AG04449 (cell line): ENCODE measurements at regions of chr20 and their contacts with region 1.

Region 1: GRCh38 chr20:35994994-35995453 is 26.6 kb downstream of the CNBD2 start:
- DNase-seq: no peak
- H3K4me3 ChIP-seq: no peak overlapping the region
- CTCF ChIP-seq: peak; percentile 96

Region 2: GRCh38 chr20:35972462-35972861 is 22.6 kb before region 1 on chr20:
- CTCF ChIA-PET with region 1: interaction called, 128 read pairs
- POLR2A ChIA-PET with region 1: no interaction called
- DNase-seq: no peak
- H3K4me3 ChIP-seq: no peak overlapping the region
- CTCF ChIP-seq: no peak

Region 3: GRCh38 chr20:36017034-36017951 is 22.3 kb after region 1 on chr20:
- CTCF ChIA-PET with region 1: interaction called, 93 read pairs
- POLR2A ChIA-PET with region 1: no interaction called
- DNase-seq: peak; percentile 29
- H3K4me3 ChIP-seq: no peak overlapping the region
- CTCF ChIP-seq: no peak

Region 4: DNA sequence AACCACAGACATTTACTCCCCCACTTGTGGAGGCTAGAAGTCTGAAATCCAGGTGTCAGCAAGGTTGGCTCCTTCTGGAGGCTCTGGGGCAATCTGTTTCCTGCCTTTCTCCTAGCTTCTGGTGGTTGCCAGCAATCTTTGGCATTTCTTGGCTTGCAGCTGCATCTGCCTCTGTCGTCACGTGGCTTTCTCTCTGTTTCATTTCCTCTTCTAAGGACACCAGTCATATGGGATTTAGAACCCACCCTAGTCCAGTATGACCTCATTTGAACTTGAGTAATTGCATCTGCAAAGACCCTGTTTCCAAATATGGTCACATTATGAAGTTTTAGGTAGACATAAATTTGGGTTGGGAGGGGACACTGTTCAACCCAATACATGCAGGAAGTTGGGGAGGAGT is 103.3 kb after region 1 on chr20:
- CTCF ChIA-PET with region 1: interaction called, 11 read pairs
- POLR2A ChIA-PET with region 1: no interaction called
- DNase-seq: no peak
- H3K4me3 ChIP-seq: no peak overlapping the region
- CTCF ChIP-seq: no peak

Region 5: GRCh38 chr20:36153736-36154699 is 159.0 kb after region 1 on chr20:
- CTCF ChIA-PET with region 1: interaction called, 971 read pairs
- POLR2A ChIA-PET with region 1: no interaction called
- DNase-seq: no peak
- H3K4me3 ChIP-seq: peak overlapping the region; percentile 78
- CTCF ChIP-seq: no peak